Activated B cell treated with CpG ODN at 0.5 μM for 24 hours (primary cell): ENCODE measurements at regions of chr19 and their contacts with region 1.

Region 1: GRCh38 chr19:39403331-39404312 is 3.0 kb upstream of the ZFP36 start:
- DNase-seq: peak; percentile 93
- ATAC-seq: peak; percentile 38
- H3K4me3 Mint-ChIP-seq: peak overlapping the region; percentile 89
- H3K27ac Mint-ChIP-seq: peak overlapping the region; percentile 91
- H3K4me1 Mint-ChIP-seq: peaks cover 74% of the 10 kb centered on the region
- H3K27me3 Mint-ChIP-seq: no peaks in the 10 kb centered on the region
- CTCF ChIP-seq: no peak

Region 2: DNA sequence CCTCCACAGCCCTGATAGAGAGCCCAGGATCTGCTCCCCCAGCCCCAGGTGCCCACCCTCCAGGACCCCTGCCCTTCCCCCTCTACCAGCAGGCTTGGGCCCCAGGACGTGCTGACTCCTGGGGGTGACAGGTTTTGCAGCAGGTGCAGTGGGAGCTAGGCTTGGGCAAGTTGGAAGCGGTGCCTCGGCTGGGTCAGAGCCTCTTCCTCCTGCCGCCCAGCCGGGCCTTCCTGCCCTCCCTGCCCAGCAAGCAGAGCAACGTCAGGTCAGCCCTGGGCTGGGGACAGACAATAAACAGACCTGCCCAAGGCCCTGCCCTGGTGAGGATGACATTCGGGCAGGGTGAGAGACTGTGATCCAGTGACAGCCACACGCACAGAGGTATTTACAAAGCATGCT is 216.1 kb before region 1 on chr19:
- CTCF ChIA-PET with region 1: no interaction called
- POLR2A ChIA-PET with region 1: no interaction called
- intact Hi-C with region 1: no loop called
- DNase-seq: no peak
- ATAC-seq: no peak
- H3K4me3 Mint-ChIP-seq: no peak overlapping the region
- H3K27ac Mint-ChIP-seq: no peak overlapping the region
- H3K4me1 Mint-ChIP-seq: no peaks in the 10 kb centered on the region
- H3K27me3 Mint-ChIP-seq: peaks cover 6% of the 10 kb centered on the region
- CTCF ChIP-seq: no peak

Region 3: GRCh38 chr19:39307046-39307823 is 96.4 kb before region 1 on chr19:
- CTCF ChIA-PET with region 1: no interaction called
- POLR2A ChIA-PET with region 1: no interaction called
- intact Hi-C with region 1: no loop called
- DNase-seq: no peak
- ATAC-seq: no peak
- H3K4me3 Mint-ChIP-seq: no peak overlapping the region
- H3K27ac Mint-ChIP-seq: no peak overlapping the region
- H3K4me1 Mint-ChIP-seq: no peaks in the 10 kb centered on the region
- H3K27me3 Mint-ChIP-seq: peaks cover 6% of the 10 kb centered on the region
- CTCF ChIP-seq: no peak

Region 4: GRCh38 chr19:39335168-39335548 is 68.5 kb before region 1 on chr19:
- CTCF ChIA-PET with region 1: no interaction called
- POLR2A ChIA-PET with region 1: interaction called, 10 read pairs
- intact Hi-C with region 1: no loop called
- DNase-seq: no peak
- ATAC-seq: peak; percentile 22
- H3K4me3 Mint-ChIP-seq: peak overlapping the region; percentile 94
- H3K27ac Mint-ChIP-seq: peak overlapping the region; percentile 95
- H3K4me1 Mint-ChIP-seq: peaks cover 61% of the 10 kb centered on the region
- H3K27me3 Mint-ChIP-seq: no peaks in the 10 kb centered on the region
- CTCF ChIP-seq: no peak

Region 5: DNA sequence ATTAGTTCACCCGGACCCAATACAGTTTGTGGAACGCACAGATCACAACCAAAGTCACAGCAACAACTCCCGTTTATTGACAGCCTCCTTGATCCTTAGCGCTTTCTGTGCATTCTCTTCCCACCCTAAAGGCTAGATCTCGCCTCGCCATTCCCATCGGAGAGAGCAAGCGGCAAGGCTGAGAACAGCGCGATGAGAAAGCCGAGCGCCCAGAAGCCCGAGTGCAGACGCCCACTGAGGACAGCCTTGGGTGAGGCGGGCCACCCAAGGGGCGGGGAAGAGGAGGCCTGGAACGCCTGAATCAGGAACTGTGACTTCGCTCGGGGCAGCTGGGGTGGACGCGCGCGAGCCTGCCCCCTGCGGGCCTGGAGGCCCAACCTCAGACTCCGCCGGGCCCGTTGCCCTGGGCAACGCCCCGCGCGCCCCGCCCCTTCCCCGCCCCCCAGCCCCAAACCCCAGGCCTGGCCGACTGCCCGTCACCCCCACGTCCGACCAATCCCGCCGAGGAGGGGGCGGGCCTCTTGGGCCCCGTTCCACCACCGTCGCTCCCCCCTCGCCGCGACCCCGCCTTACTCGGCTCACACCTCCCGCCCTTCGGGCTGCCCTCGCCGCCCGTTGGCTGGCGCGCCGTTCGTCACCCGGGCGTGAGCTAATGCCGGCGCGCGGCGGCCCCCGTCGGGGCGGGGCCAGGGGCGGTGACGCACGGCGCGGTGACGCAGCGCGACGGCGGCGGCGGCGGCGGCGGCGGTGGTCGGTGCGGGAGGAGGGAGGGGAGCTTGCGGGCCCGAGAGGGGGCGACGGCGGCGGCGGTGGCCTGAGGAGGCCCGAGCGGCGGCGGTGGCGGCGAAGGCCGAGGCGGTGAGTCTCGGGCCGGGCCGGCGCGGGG is 61.7 kb before region 1 on chr19 and contains the start of gene SAMD4B:
- CTCF ChIA-PET with region 1: interaction called, 5 read pairs
- POLR2A ChIA-PET with region 1: interaction called, 11 read pairs
- intact Hi-C with region 1: no loop called
- DNase-seq: peak; percentile 97
- ATAC-seq: peak; percentile 91
- H3K4me3 Mint-ChIP-seq: peak within 1 kb of the TSS; percentile 99
- H3K27ac Mint-ChIP-seq: peak within 1 kb of the TSS; percentile 97
- H3K4me1 Mint-ChIP-seq: peaks cover 69% of the 10 kb centered on the region
- H3K27me3 Mint-ChIP-seq: no peaks in the 10 kb centered on the region
- CTCF ChIP-seq: no peak
- total RNA-seq, gene SAMD4B: 53.0 and 60.7 TPM in 2 replicates